Naive thymus-derived CD4-positive, alpha-beta T cell (primary cell): ENCODE measurements at regions of chr18 and their contacts with region 1.

Region 1: GRCh38 chr18:76588601-76589226 is 93.7 kb upstream of the ZNF516 start:
- DNase-seq: no peak
- ATAC-seq: no peak
- H3K4me3 ChIP-seq: no peak overlapping the region
- H3K4me3 Mint-ChIP-seq: peak overlapping the region in 9 of 10 donors; percentile 36 to 77 (median 62)
- H3K27ac ChIP-seq: no peak overlapping the region
- H3K27ac Mint-ChIP-seq: peak overlapping the region in 1 of 9 donors; percentile 51
- H3K4me1 ChIP-seq: peaks cover 0 to 7% of the 10 kb centered on the region in 2 donors
- H3K4me1 Mint-ChIP-seq: peaks cover 0 to 13% (median 11%) of the 10 kb centered on the region in 7 donors
- H3K27me3 ChIP-seq: no peaks in the 10 kb centered on the region
- H3K27me3 Mint-ChIP-seq: peaks cover 30 to 50% (median 36%) of the 10 kb centered on the region in 5 donors

Region 2: GRCh38 chr18:75097491-75098225 is 1491.1 kb before region 1 on chr18:
- CTCF ChIA-PET with region 1: no interaction called
- POLR2A ChIA-PET with region 1: no interaction called
- intact Hi-C with region 1: no loop called
- DNase-seq: no peak
- ATAC-seq: no peak
- H3K4me3 ChIP-seq: no peak overlapping the region
- H3K4me3 Mint-ChIP-seq: no peak overlapping the region
- H3K27ac ChIP-seq: no peak overlapping the region
- H3K27ac Mint-ChIP-seq: no peak overlapping the region
- H3K4me1 ChIP-seq: no peaks in the 10 kb centered on the region
- H3K4me1 Mint-ChIP-seq: no peaks in the 10 kb centered on the region
- H3K27me3 ChIP-seq: no peaks in the 10 kb centered on the region
- H3K27me3 Mint-ChIP-seq: peaks cover 0 to 17% (median 5%) of the 10 kb centered on the region in 5 donors

Region 3: DNA sequence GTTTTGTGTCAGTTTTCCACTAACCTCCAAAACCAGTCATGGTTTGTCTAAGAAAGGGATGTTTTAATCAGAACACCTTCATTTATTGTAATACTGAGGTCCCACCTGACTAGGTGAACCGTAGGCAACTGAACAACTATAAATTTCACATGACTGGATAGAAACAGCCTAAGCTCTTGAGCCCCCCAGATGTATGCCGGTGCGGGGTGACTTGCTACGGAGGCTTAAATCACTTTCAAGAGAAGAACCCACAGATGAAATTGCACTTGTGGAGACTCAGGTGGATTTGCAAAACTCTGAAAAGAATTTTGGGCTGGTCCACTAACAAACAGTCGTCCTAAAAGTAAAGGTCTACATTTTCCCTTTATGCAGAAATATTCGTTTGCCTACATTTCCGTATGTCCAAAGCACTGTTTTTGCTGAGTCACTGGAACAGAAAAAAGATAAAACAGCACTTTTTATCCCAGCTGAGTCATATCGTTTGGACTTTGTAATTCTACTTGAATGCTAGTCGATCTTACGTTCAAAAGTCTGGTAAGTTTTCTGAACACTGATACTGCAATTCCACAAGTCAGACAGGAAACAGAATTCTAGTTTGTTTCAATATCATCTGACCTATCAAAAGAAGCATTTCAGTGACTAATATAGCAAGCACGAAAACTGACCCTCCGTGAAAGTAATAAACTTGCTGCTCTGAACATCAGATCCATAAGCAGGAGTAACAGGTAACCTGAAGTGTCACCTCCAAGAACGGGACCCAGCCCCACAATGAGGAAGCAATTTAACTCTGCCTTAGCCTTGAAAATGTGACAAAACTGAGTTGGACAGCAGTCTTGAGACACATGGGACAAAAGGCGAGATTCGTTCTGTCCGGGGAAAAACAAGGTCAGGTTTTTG is 111.8 kb before region 1 on chr18:
- CTCF ChIA-PET with region 1: no interaction called
- POLR2A ChIA-PET with region 1: no interaction called
- intact Hi-C with region 1: loop called in 1 of 2 experiments (anchors 10 kb)
- DNase-seq: no peak
- ATAC-seq: no peak
- H3K4me3 ChIP-seq: no peak overlapping the region
- H3K4me3 Mint-ChIP-seq: peak overlapping the region in 8 of 10 donors; percentile 5 to 72 (median 50)
- H3K27ac ChIP-seq: no peak overlapping the region
- H3K27ac Mint-ChIP-seq: peak overlapping the region in 4 of 9 donors; percentile 26 to 72 (median 28)
- H3K4me1 ChIP-seq: peaks cover 0 to 7% of the 10 kb centered on the region in 2 donors
- H3K4me1 Mint-ChIP-seq: peaks cover 4 to 74% (median 58%) of the 10 kb centered on the region in 7 donors
- H3K27me3 ChIP-seq: no peaks in the 10 kb centered on the region
- H3K27me3 Mint-ChIP-seq: peaks cover 0 to 36% (median 0%) of the 10 kb centered on the region in 5 donors

Region 4: DNA sequence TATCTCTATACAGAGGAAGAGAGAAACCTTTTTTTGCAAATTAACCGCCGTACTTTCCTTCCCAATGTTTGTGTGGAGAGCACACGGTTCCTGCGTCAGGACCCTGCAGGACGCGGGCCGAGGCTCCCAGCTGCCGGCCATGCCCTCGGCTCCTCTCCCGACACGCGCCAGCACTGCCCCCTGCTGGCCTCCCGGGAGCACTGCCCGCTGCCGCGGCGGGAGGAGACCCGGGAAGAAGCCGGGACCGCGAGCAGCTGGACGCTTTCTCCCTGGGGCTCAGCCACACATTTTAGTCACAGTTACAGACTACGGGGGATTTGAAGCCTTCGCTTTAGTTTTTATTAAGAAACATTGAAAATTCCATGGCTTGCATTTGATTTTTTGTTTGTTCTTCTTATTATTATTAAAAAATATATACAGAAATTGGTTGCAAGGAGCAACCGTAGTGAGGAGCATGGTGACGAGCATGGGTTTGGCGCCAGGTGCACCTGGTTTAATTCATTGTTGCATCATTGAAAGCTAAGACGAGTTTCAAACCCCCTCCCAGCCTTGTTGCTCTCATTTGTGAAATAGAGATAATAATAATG is 1062.2 kb after region 1 on chr18:
- CTCF ChIA-PET with region 1: no interaction called
- POLR2A ChIA-PET with region 1: no interaction called
- intact Hi-C with region 1: no loop called
- DNase-seq: peak in 6 of 9 donors; percentile 3 to 79 (median 16)
- ATAC-seq: peak; percentile 67
- H3K4me3 ChIP-seq: no peak overlapping the region
- H3K4me3 Mint-ChIP-seq: no peak overlapping the region
- H3K27ac ChIP-seq: no peak overlapping the region
- H3K27ac Mint-ChIP-seq: no peak overlapping the region
- H3K4me1 ChIP-seq: no peaks in the 10 kb centered on the region
- H3K4me1 Mint-ChIP-seq: peaks cover 0 to 5% (median 0%) of the 10 kb centered on the region in 7 donors
- H3K27me3 ChIP-seq: no peaks in the 10 kb centered on the region
- H3K27me3 Mint-ChIP-seq: peaks cover 2 to 33% (median 21%) of the 10 kb centered on the region in 5 donors